ENCODE measurements at regions of chr16 and their contacts with region 1.

Region 1: GRCh38 chr16:10937068-10937859 is 5.0 kb downstream of the DEXI start:
- DNase-seq: peak; percentile 25
- H3K4me3 Mint-ChIP-seq: peak overlapping the region; percentile 51
- H3K27ac Mint-ChIP-seq: peak overlapping the region; percentile 45
- H3K4me1 Mint-ChIP-seq: peaks cover 83% of the 10 kb centered on the region
- H3K27me3 Mint-ChIP-seq: no peaks in the 10 kb centered on the region

Region 2: GRCh38 chr16:10799736-10800135 is 137.5 kb before region 1 on chr16:
- CTCF ChIA-PET with region 1: no interaction called
- POLR2A ChIA-PET with region 1: no interaction called
- DNase-seq: no peak
- H3K4me3 Mint-ChIP-seq: no peak overlapping the region
- H3K27ac Mint-ChIP-seq: no peak overlapping the region
- H3K4me1 Mint-ChIP-seq: no peaks in the 10 kb centered on the region
- H3K27me3 Mint-ChIP-seq: peaks cover 5% of the 10 kb centered on the region

Region 3: DNA sequence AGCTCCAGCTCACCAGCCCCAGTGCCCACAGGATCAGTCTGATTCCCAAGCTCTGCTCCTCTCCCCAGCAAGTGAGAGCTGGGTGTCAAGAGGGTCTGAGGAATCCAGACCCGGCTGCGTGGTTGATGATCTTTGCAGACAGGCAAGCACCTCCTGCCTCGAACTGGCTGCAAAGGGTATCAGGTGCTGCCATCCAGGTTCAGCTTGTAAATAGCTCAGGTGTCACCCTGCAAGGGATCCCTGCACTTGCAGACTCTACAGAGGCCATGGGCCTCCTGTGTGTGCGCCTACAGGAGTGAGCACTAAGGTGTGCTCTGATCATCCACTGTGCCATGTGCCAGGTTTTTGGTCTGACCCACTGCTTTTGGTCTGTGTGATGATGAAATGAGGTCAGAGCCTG is 11.2 kb before region 1 on chr16:
- CTCF ChIA-PET with region 1: interaction called, 3 read pairs
- POLR2A ChIA-PET with region 1: interaction called, 11 read pairs
- DNase-seq: no peak
- H3K4me3 Mint-ChIP-seq: no peak overlapping the region
- H3K27ac Mint-ChIP-seq: no peak overlapping the region
- H3K4me1 Mint-ChIP-seq: peaks cover 4% of the 10 kb centered on the region
- H3K27me3 Mint-ChIP-seq: no peaks in the 10 kb centered on the region

Measured in activated CD4-positive, alpha-beta memory T cell treated with anti-CD3 and anti-CD28 coated beads, Interleukin-2, amount 10 ng/mL, durations not matched to agents 7 days and 5 days (primary cell).